Activated CD4-positive, alpha-beta memory T cell treated with anti-CD3 and anti-CD28 coated beads for 36 hours (primary cell): ENCODE measurements at regions of chr12 and their contacts with region 1.

Region 1: GRCh38 chr12:92505254-92506231 is 197.2 kb upstream of the PLEKHG7 start:
- DNase-seq: peak; percentile 75
- H3K4me3 Mint-ChIP-seq: peak overlapping the region; percentile 69
- H3K27ac Mint-ChIP-seq: peak overlapping the region; percentile 96
- H3K4me1 Mint-ChIP-seq: peaks cover 51% of the 10 kb centered on the region
- H3K27me3 Mint-ChIP-seq: no peaks in the 10 kb centered on the region

Region 2: DNA sequence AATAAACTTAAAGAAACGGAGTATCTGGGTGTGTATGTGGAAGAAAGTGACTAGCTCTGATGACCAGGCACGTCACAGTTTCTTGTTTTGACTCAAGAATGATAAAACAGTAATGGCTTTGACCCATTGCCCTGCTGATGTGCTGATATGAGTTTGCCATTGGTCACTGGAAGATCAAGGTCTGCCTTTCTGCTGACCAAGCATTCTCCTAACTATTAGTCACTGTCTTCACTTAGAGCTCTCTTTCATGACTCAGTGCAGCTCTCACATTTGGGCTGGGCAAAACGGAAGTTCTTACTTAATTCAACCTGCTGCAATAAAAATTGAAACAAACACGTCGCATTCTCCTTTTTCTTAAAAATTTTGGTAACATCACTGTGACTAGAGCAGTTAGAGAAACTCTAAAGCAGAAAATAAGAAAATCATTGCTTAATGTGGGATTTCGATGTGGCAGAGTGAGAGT is 726.6 kb before region 1 on chr12:
- CTCF ChIA-PET with region 1: interaction called, 3 read pairs
- POLR2A ChIA-PET with region 1: no interaction called
- intact Hi-C with region 1: loop called (anchors 2 kb)
- DNase-seq: peak; percentile 65
- H3K4me3 Mint-ChIP-seq: peak overlapping the region; percentile 48
- H3K27ac Mint-ChIP-seq: peak overlapping the region; percentile 75
- H3K4me1 Mint-ChIP-seq: peaks cover 27% of the 10 kb centered on the region
- H3K27me3 Mint-ChIP-seq: peaks cover 3% of the 10 kb centered on the region

Region 3: GRCh38 chr12:92469837-92470236 is 35.7 kb before region 1 on chr12:
- CTCF ChIA-PET with region 1: interaction called, 10 read pairs
- POLR2A ChIA-PET with region 1: interaction called, 4 read pairs
- intact Hi-C with region 1: loop called (anchors 1 kb)
- DNase-seq: no peak
- H3K4me3 Mint-ChIP-seq: no peak overlapping the region
- H3K27ac Mint-ChIP-seq: peak overlapping the region; percentile 83
- H3K4me1 Mint-ChIP-seq: peaks cover 38% of the 10 kb centered on the region
- H3K27me3 Mint-ChIP-seq: no peaks in the 10 kb centered on the region

Region 4: DNA sequence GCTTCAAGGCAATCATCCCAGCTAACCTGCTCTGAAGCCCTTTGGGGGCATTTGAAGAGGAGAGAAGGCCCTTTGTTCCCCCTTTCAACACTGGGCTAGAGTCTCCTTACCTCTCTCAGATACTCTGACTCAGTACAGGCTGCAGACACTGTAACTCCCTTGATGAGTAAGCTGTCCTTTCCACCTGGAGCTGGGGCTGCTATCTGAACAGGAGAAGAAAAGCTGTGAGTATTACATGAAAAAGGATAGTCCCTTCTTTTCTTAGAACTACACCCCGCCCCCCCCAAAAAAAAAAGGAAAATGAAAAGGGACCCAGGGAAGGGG is 10.7 kb after region 1 on chr12:
- CTCF ChIA-PET with region 1: interaction called, 6 read pairs
- POLR2A ChIA-PET with region 1: interaction called, 8 read pairs
- intact Hi-C with region 1: loop called (anchors 1 kb)
- DNase-seq: peak; percentile 55
- H3K4me3 Mint-ChIP-seq: peak overlapping the region; percentile 17
- H3K27ac Mint-ChIP-seq: peak overlapping the region; percentile 84
- H3K4me1 Mint-ChIP-seq: peaks cover 28% of the 10 kb centered on the region
- H3K27me3 Mint-ChIP-seq: no peaks in the 10 kb centered on the region

Region 5: DNA sequence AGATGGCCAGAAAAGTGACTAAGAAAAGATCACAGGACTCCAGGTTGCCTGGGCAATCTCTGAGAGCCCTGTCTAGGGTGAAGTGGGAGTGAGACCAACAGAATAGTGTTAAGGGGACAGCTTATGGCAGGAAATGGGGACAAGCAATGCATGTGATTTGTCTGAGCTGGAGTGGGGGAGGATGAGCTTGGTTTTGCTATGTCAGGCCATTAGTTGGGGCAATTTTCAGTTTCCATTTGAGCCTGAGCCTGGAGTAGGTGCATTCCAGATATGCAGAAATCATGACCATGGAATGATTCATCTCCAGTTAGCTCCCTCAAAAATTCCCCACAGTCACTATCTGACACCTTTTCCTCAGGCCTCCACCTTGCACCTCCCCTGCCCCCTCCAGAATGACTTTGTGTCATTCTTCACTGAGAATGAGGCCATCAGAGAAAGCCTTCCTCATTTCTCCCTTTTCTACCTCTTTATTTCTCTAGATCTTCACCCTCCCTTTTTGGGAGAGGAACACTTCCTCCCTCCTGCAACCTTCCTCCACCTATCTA is 46.4 kb after region 1 on chr12:
- CTCF ChIA-PET with region 1: interaction called, 31 read pairs
- POLR2A ChIA-PET with region 1: interaction called, 14 read pairs
- intact Hi-C with region 1: loop called (anchors 1 kb)
- DNase-seq: peak; percentile 75
- H3K4me3 Mint-ChIP-seq: no peak overlapping the region
- H3K27ac Mint-ChIP-seq: no peak overlapping the region
- H3K4me1 Mint-ChIP-seq: peaks cover 25% of the 10 kb centered on the region
- H3K27me3 Mint-ChIP-seq: no peaks in the 10 kb centered on the region

Region 6: GRCh38 chr12:92649511-92650227 is 144.1 kb after region 1 on chr12:
- CTCF ChIA-PET with region 1: interaction called, 9 read pairs
- POLR2A ChIA-PET with region 1: no interaction called
- intact Hi-C with region 1: loop called (anchors 2 kb)
- DNase-seq: peak; percentile 65
- H3K4me3 Mint-ChIP-seq: no peak overlapping the region
- H3K27ac Mint-ChIP-seq: no peak overlapping the region
- H3K4me1 Mint-ChIP-seq: peaks cover 12% of the 10 kb centered on the region
- H3K27me3 Mint-ChIP-seq: no peaks in the 10 kb centered on the region